ENCODE measurements at regions of chr2 and their contacts with region 1.

Region 1: DNA sequence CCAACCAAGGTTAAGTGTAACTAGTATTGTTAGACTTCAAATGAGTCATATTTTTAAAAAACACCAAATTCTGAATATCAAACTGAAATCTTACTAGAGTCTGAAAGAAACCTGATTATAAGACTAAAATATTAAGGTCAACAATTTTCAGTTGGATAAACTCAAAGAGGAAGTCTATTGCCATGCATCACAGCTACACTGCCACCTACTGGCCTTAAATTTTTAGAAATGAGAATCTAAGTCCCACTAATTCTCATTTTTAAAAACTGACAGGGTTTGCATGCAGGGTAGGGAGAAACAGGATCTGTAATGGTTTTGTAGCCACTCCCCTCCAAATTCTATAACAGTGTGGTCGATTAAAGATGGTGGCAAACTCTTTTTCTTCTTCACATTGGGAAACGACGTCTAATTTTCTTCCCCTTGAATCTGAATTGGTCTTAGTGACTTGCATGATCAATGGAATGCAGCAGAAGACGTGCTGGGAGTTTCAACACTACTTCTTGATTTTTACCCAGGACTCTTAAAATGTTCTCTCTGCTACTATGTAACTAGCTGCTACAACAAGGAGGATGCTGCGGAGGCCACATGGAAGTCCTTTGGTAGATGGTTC is 176.1 kb upstream of the SESTD1 start:
- DNase-seq: peak in 1 of 5 donors; percentile 25
- H3K4me3 ChIP-seq: no peak overlapping the region
- H3K27ac ChIP-seq: no peak overlapping the region
- H3K4me1 ChIP-seq: peaks cover 0 to 4% (median 0%) of the 10 kb centered on the region in 3 donors
- H3K27me3 ChIP-seq: no peaks in the 10 kb centered on the region
- CTCF ChIP-seq: peak; percentile 39

Region 2: GRCh38 chr2:179044500-179044899 is 396.2 kb before region 1 on chr2:
- intact Hi-C with region 1: no loop called
- DNase-seq: no peak
- H3K4me3 ChIP-seq: no peak overlapping the region
- H3K27ac ChIP-seq: no peak overlapping the region
- H3K4me1 ChIP-seq: peaks cover 0 to 9% (median 4%) of the 10 kb centered on the region in 3 donors
- H3K27me3 ChIP-seq: no peaks in the 10 kb centered on the region
- CTCF ChIP-seq: no peak

Region 3: GRCh38 chr2:179218848-179219594 is 221.7 kb before region 1 on chr2:
- intact Hi-C with region 1: loop called (anchors 10 kb)
- DNase-seq: peak in 4 of 5 donors; percentile 61 to 87 (median 79)
- H3K4me3 ChIP-seq: no peak overlapping the region
- H3K27ac ChIP-seq: no peak overlapping the region
- H3K4me1 ChIP-seq: peaks cover 0 to 2% (median 0%) of the 10 kb centered on the region in 3 donors
- H3K27me3 ChIP-seq: no peaks in the 10 kb centered on the region
- CTCF ChIP-seq: peak; percentile 91

Region 4: GRCh38 chr2:179538406-179539123 is 97.8 kb after region 1 on chr2:
- intact Hi-C with region 1: no loop called
- DNase-seq: no peak
- H3K4me3 ChIP-seq: no peak overlapping the region
- H3K27ac ChIP-seq: no peak overlapping the region
- H3K4me1 ChIP-seq: no peaks in the 10 kb centered on the region
- H3K27me3 ChIP-seq: no peaks in the 10 kb centered on the region
- CTCF ChIP-seq: no peak